ENCODE measurements at regions of chr15 and their contacts with region 1.

Region 1: GRCh38 chr15:99296386-99296785 is 45.1 kb downstream of the LRRC28 start:
- DNase-seq: no peak
- ATAC-seq: no peak
- H3K4me3 ChIP-seq: no peak overlapping the region
- H3K27ac ChIP-seq: no peak overlapping the region
- H3K4me1 ChIP-seq: no peaks in the 10 kb centered on the region
- H3K27me3 ChIP-seq: no peaks in the 10 kb centered on the region
- CTCF ChIP-seq: no peak
- POLR2A ChIP-seq: no peak

Region 2: GRCh38 chr15:99224372-99225214 is 71.8 kb before region 1 on chr15:
- intact Hi-C with region 1: no loop called
- DNase-seq: no peak
- ATAC-seq: no peak
- H3K4me3 ChIP-seq: no peak overlapping the region
- H3K27ac ChIP-seq: no peak overlapping the region
- H3K4me1 ChIP-seq: peaks cover 0 to 6% (median 0%) of the 10 kb centered on the region in 12 donors
- H3K27me3 ChIP-seq: no peaks in the 10 kb centered on the region
- CTCF ChIP-seq: no peak
- POLR2A ChIP-seq: no peak

Region 3: GRCh38 chr15:99361541-99362185 is 65.3 kb after region 1 on chr15:
- intact Hi-C with region 1: loop called in 1 of 10 experiments (anchors 10 kb)
- DNase-seq: no peak
- ATAC-seq: no peak
- H3K4me3 ChIP-seq: no peak overlapping the region
- H3K27ac ChIP-seq: no peak overlapping the region
- H3K4me1 ChIP-seq: no peaks in the 10 kb centered on the region
- H3K27me3 ChIP-seq: no peaks in the 10 kb centered on the region
- CTCF ChIP-seq: peak; percentile 27 to 60 (median 42)
- POLR2A ChIP-seq: no peak

Region 4: GRCh38 chr15:99556011-99556410 is 259.6 kb after region 1 on chr15:
- intact Hi-C with region 1: loop called in 2 of 10 experiments (anchors 10 kb)
- DNase-seq: no peak
- ATAC-seq: no peak
- H3K4me3 ChIP-seq: no peak overlapping the region
- H3K27ac ChIP-seq: no peak overlapping the region
- H3K4me1 ChIP-seq: no peaks in the 10 kb centered on the region
- H3K27me3 ChIP-seq: no peaks in the 10 kb centered on the region
- CTCF ChIP-seq: no peak
- POLR2A ChIP-seq: no peak

Measured in heart left ventricle (tissue), 16 donors.